Endothelial cell of umbilical vein (primary cell): ENCODE measurements at regions of chr1 and their contacts with region 1.

Region 1: DNA sequence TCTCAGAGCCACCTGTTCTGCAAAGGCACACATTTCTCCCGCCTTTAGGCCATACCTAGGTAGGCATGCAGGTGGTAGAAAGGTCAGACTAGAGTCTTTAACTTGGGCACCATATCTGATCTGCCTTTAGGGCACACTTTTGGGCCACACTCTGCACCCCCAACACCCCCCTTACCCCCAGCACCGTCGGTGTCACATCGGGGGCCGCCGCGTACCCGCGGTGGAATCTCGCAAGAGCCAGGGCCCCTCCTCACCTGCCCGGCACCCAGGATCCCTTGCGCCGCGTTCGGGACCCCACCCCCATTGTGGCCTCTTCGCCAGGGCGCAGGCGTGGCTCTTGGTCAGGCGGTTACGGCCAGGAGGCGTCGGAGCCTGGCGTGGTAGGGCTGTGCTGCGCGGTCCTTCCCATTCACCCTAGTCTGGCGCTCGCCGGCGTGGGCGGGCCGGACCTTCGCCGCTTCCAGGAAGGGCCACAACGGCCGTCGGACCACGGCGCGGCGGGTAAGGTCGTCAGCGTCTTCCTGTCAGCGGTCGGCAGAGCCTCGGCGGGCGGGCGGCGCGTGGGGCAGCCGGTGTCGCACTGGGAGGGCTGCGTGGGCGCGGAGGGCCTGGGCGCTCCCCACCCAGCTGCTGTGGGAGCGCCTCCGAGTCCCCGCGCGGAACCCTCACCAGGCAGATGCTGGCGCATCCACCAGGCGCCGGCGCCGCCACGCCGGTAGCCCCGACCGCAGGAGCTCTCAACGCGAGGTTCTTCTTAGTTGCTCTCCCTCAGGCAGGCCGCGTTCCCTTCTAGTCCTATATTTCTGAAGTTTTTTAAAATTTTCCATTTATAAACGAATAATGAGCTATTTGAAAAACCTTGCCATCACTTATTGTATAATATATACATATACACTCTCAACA is at the start of gene DNAH14:
- DNase-seq: peak; percentile 73
- H3K4me3 ChIP-seq: peak within 1 kb of the TSS; percentile 31 to 66 (median 53)
- H3K27ac ChIP-seq: peak within 1 kb of the TSS; percentile 27
- H3K4me1 ChIP-seq: peaks cover 3% of the 10 kb centered on the region
- H3K27me3 ChIP-seq: no peaks in the 10 kb centered on the region
- CTCF ChIP-seq: no peak
- POLR2A ChIP-seq: peak; percentile 20
- total RNA-seq, gene DNAH14: 7.1 and 8.5 TPM in 2 replicates

Region 2: DNA sequence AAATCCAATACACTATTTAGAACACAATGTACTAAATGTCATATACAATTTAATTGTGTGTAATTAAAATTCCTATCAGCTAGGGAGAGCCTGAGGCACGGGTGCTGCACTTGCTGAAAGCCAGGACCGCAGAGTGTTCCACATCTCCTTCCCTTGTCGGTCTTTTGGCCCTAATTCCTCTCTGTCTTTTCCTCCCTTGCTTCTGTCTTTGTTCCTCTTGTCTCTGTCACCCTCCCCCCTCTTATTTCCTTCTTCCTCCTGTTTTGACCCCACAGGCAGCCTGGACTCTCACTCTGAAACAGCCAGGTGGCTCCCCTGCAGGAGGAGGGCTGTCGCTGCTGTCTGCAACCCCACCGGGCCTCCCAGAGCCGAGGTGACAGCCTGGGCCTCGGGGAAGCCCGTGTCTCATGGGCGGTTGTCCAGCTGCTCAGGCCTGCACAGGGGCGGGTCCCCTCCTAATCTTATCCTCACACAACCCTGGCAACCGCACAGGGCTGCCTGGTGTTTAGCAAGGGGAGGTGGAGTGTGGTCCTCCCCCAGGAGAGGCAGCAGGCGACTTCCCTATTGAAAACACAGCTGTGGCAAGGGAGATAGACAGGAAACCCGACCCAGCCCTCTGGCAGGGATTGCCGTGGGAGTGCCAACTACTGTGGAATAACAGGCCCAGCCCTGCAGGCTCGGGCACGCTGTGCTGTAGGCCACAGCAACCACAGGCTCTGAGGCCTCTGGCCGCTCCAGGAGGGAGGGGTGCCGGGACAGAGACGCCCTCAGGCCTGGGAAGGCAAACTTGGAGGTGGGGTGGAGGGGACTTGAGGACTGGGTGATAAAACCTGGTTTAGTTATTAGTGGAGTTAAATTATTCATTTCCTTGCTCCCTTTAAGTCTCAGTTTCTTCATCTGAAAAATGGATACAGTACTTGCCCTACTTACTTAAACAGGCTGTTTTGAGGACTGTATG is 426.1 kb before region 1 on chr1:
- CTCF ChIA-PET with region 1: no interaction called
- POLR2A ChIA-PET with region 1: no interaction called
- dilution Hi-C with region 1: no loop called
- intact Hi-C with region 1: loop called (anchors 5 kb)
- DNase-seq: peak; percentile 93
- H3K4me3 ChIP-seq: no peak overlapping the region
- H3K27ac ChIP-seq: peak overlapping the region; percentile 23
- H3K4me1 ChIP-seq: peaks cover 28% of the 10 kb centered on the region
- H3K27me3 ChIP-seq: no peaks in the 10 kb centered on the region
- CTCF ChIP-seq: peak in 1 of 2 donors; percentile 27
- POLR2A ChIP-seq: no peak

Region 3: GRCh38 chr1:224894918-224895317 is 34.7 kb before region 1 on chr1:
- CTCF ChIA-PET with region 1: no interaction called
- POLR2A ChIA-PET with region 1: no interaction called
- dilution Hi-C with region 1: no loop called
- intact Hi-C with region 1: no loop called
- DNase-seq: no peak
- H3K4me3 ChIP-seq: no peak overlapping the region
- H3K27ac ChIP-seq: no peak overlapping the region
- H3K4me1 ChIP-seq: no peaks in the 10 kb centered on the region
- H3K27me3 ChIP-seq: no peaks in the 10 kb centered on the region
- CTCF ChIP-seq: no peak
- POLR2A ChIP-seq: no peak